ENCODE measurements at regions of chr3 and their contacts with region 1.

Region 1: GRCh38 chr3:119700269-119700919 is 2.4 kb upstream of the CFAP91 start:
- DNase-seq: peak in 7 of 35 experiments; percentile 1 to 66 (median 7)
- ATAC-seq: peak in 1 of 4 experiments; percentile 56
- H3K4me3 ChIP-seq: no peak overlapping the region
- H3K4me3 Mint-ChIP-seq: peak overlapping the region in 1 of 3 donors; percentile 37
- H3K27ac ChIP-seq: peak overlapping the region; percentile 61
- H3K27ac Mint-ChIP-seq: peak overlapping the region; percentile 1 to 17
- H3K4me1 ChIP-seq: peaks cover 0 to 19% of the 10 kb centered on the region in 2 experiments
- H3K4me1 Mint-ChIP-seq: peaks cover 24 to 36% (median 30%) of the 10 kb centered on the region in 3 donors
- H3K27me3 ChIP-seq: peaks cover 5 to 7% of the 10 kb centered on the region in 2 experiments
- H3K27me3 Mint-ChIP-seq: no peaks in the 10 kb centered on the region

Region 2: DNA sequence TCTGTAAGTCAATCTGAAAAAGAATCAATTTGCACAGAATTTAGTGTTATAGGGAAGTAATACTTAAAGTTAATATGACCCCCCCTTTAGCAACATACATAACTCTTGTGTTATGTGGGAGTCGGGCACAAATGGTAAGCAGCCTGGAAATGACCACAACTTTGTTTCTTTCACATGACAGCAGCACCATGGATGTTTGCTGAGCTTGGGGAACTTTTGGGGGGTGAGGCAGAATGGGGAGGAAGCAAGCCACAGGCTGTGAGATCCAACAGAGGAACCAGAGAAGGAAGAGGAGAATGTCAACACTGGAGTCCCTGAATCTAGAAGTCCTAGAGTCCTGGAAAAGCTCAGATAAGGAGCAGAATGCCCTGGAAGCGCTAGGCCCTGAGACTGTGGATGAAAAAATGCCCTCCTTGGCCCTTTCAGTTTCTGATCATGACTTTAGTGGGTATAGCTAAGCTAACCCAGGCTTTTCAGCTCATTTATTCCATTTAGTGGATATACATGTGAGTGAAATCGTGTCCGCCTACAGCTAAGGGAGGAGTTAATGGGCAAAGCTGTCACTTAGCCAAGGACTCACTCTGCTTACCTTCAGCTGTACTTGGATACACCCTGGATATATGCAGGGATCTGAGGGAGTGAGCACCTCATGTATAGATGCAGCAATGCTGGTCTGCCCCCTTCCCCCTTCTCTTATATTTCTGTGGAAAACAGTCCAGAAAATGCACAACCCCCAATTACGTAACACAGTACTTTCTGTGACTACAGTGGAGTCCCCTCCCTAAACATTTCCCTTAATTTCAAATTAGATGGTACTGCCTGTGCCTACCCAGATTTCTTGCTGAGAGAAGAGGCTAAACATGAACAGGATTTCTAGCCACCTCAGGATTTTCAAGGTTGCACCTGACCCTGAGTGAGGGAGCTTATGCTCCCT is 41.5 kb after region 1 on chr3:
- CTCF ChIA-PET with region 1: interaction called in 1 of 2 experiments, 10 read pairs
- POLR2A ChIA-PET with region 1: no interaction called
- DNase-seq: no peak
- ATAC-seq: no peak
- H3K4me3 ChIP-seq: no peak overlapping the region
- H3K4me3 Mint-ChIP-seq: no peak overlapping the region
- H3K27ac ChIP-seq: no peak overlapping the region
- H3K27ac Mint-ChIP-seq: no peak overlapping the region
- H3K4me1 ChIP-seq: no peaks in the 10 kb centered on the region
- H3K4me1 Mint-ChIP-seq: no peaks in the 10 kb centered on the region
- H3K27me3 ChIP-seq: peaks cover 0 to 13% of the 10 kb centered on the region in 2 experiments
- H3K27me3 Mint-ChIP-seq: peaks cover 16 to 29% of the 10 kb centered on the region in 2 donors

Measured in T-cell (primary cell).